HAP-1 (cell line): ENCODE measurements at regions of chr1 and their contacts with region 1.

Region 1: GRCh38 chr1:109984456-109985275 is at the start of gene AHCYL1:
- DNase-seq: peak; percentile 97 to 99
- H3K4me3 ChIP-seq: peak within 1 kb of the TSS; percentile 71
- H3K4me1 ChIP-seq: peaks cover 13% of the 10 kb centered on the region
- H3K27me3 ChIP-seq: no peaks in the 10 kb centered on the region

Region 2: DNA sequence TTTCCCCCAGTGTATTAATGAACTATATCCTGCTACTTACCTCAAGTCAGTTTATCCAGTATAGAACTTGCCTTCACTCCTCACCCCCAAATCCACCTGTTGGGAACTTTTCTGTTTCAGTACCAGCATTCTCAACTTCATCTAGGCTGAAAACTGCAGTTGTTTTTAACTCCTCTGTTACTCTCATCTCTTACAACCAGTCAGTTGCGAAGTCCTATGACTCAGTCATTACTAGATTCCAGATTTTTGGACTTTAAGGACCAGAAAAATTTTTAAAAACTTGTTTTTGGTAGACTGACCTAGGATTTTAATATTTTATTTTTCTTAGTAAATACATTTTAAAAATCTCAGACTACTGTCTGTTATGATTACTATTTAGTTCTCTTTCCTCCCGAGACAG is 428.1 kb before region 1 on chr1:
- in situ Hi-C with region 1: no loop called
- DNase-seq: no peak
- H3K4me3 ChIP-seq: no peak overlapping the region
- H3K4me1 ChIP-seq: peaks cover 12% of the 10 kb centered on the region
- H3K27me3 ChIP-seq: no peaks in the 10 kb centered on the region

Region 3: GRCh38 chr1:109655601-109656519 is 328.8 kb before region 1 on chr1 and contains the start of gene GSTM4:
- in situ Hi-C with region 1: loop called (anchors 10 kb)
- DNase-seq: peak; percentile 90 to 95
- H3K4me3 ChIP-seq: peak within 1 kb of the TSS; percentile 73
- H3K4me1 ChIP-seq: peaks cover 2% of the 10 kb centered on the region; the same call in 1 of the 2 replicates
- H3K27me3 ChIP-seq: no peaks in the 10 kb centered on the region

Region 4: GRCh38 chr1:109773146-109773899 is 211.3 kb before region 1 on chr1:
- in situ Hi-C with region 1: loop called (anchors 5 kb)
- DNase-seq: peak; percentile 80 to 86
- H3K4me3 ChIP-seq: no peak overlapping the region
- H3K4me1 ChIP-seq: no peaks in the 10 kb centered on the region
- H3K27me3 ChIP-seq: no peaks in the 10 kb centered on the region